ENCODE measurements at regions of chr5 and their contacts with region 1.

Region 1: DNA sequence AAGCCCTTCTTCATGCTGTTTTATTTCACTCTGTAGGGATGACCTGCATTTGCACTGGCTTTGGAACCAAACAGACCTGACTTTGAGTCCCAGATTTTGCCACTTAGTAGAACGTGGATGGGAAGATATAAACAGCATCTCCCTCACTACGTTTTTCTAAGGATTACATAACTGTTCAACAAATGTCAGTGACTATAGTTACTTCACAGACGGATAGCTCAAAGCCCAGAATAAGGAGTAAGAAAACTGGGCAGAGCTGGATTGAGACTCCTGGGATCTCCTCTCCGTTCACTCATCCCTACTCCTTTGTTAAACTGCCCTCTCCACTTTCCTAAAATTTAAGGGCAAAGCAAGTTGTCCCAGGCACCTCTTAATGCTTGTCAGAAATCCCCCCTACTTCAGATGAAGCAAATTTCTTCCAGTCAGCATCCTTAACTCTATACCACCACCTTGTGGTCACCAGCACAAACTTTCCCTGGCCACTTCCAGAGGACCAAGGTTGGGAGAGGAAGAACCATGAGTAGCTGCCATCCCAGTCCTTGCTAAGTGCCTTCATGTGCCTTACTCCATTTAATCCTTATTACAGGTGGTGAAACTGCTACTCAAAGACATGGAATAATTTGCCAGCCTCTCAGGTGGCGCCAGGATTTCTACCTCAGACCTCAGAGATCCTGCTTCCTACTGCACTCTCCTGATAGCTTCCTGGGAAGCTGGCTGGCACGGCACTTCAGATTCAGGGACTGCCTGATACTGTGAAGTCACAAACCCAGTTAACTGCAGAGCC is 38.4 kb downstream of the EGR1 start:
- DNase-seq: peak; percentile 46
- H3K4me3 Mint-ChIP-seq: no peak overlapping the region
- H3K27ac Mint-ChIP-seq: no peak overlapping the region
- H3K4me1 Mint-ChIP-seq: no peaks in the 10 kb centered on the region
- H3K27me3 Mint-ChIP-seq: peaks cover 4% of the 10 kb centered on the region

Region 2: GRCh38 chr5:138457531-138458275 is 46.0 kb before region 1 on chr5:
- CTCF ChIA-PET with region 1: interaction called, 114 read pairs
- DNase-seq: no peak
- H3K4me3 Mint-ChIP-seq: no peak overlapping the region
- H3K27ac Mint-ChIP-seq: no peak overlapping the region
- H3K4me1 Mint-ChIP-seq: peaks cover 32% of the 10 kb centered on the region
- H3K27me3 Mint-ChIP-seq: peaks cover 43% of the 10 kb centered on the region

Region 3: DNA sequence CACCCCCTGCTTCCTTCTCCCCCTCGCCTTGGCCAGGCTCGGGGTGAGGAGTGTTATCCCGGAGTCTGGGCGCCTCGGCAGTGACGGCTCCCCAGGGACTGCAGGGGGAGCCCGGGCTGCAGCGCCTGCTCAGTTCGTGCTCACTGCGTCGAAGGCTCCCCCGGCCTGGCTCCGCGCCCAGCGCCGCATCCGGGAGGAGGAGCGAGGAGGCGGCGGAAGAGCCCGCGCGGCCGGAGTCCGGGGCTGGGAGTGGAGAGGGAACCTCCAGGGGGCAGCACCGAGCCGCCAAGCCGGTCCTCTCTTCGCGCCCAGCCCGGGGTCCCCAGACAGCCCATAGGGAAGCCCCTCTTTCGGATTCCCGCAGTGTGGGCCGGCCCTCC is 39.7 kb before region 1 on chr5:
- CTCF ChIA-PET with region 1: interaction called, 38 read pairs
- DNase-seq: peak; percentile 93
- H3K4me3 Mint-ChIP-seq: peak overlapping the region; percentile 74
- H3K27ac Mint-ChIP-seq: peak overlapping the region; percentile 96
- H3K4me1 Mint-ChIP-seq: peaks cover 31% of the 10 kb centered on the region
- H3K27me3 Mint-ChIP-seq: peaks cover 42% of the 10 kb centered on the region

Region 4: GRCh38 chr5:138492560-138493045 is 11.1 kb before region 1 on chr5:
- CTCF ChIA-PET with region 1: interaction called, 20 read pairs
- DNase-seq: no peak
- H3K4me3 Mint-ChIP-seq: peak overlapping the region; percentile 80
- H3K27ac Mint-ChIP-seq: no peak overlapping the region
- H3K4me1 Mint-ChIP-seq: peaks cover 10% of the 10 kb centered on the region
- H3K27me3 Mint-ChIP-seq: peaks cover 80% of the 10 kb centered on the region

Region 5: GRCh38 chr5:138514021-138514420 is 10.3 kb after region 1 on chr5:
- CTCF ChIA-PET with region 1: interaction called, 10 read pairs
- DNase-seq: no peak
- H3K4me3 Mint-ChIP-seq: no peak overlapping the region
- H3K27ac Mint-ChIP-seq: peak overlapping the region; percentile 0
- H3K4me1 Mint-ChIP-seq: no peaks in the 10 kb centered on the region
- H3K27me3 Mint-ChIP-seq: no peaks in the 10 kb centered on the region

Region 6: DNA sequence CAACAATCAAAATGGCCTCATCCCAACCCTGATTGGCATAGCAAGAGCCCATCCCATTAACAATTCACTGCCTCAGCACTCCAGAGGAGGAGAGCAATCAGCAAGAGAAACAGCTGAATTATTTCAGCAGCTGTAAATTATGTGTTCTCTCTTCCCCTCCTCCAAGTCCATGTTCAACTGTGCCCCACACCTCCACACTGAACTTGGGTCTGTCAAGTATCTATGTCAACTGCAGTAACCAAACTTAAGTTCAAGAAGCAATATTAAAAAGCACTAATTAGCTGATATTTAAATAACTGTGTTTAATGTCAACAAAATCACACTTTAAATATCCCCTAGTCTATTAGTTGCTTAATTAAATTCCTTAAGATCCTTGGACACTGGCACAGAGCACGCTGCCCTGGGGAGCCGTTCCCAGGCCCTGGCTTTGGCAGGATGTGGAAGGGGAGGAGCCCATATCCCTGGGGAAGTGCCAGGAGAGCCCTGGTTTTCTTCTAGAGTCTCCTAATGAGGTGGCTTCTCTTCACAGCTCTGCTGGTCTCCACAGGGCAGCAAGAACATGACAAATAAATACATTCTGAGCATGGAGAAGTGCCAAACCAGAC is 643.9 kb after region 1 on chr5:
- CTCF ChIA-PET with region 1: no interaction called
- DNase-seq: no peak
- H3K4me3 Mint-ChIP-seq: no peak overlapping the region
- H3K27ac Mint-ChIP-seq: no peak overlapping the region
- H3K4me1 Mint-ChIP-seq: no peaks in the 10 kb centered on the region
- H3K27me3 Mint-ChIP-seq: no peaks in the 10 kb centered on the region

Measured in activated naive CD4-positive, alpha-beta T cell treated with anti-CD3 and anti-CD28 coated beads, Interleukin-2, amount 10 ng/mL, durations not matched to agents 7 days and 5 days (primary cell).